ENCODE measurements at regions of chr1 and their contacts with region 1.

Region 1: GRCh38 chr1:226679853-226680516 is 59.1 kb downstream of the ITPKB start:
- H3K4me3 Mint-ChIP-seq: peak overlapping the region; percentile 90
- H3K27ac Mint-ChIP-seq: peak overlapping the region; percentile 99
- H3K4me1 Mint-ChIP-seq: peaks cover 85% of the 10 kb centered on the region
- H3K27me3 Mint-ChIP-seq: no peaks in the 10 kb centered on the region

Region 2: GRCh38 chr1:226642876-226643576 is 37.0 kb before region 1 on chr1:
- intact Hi-C with region 1: loop called (anchors 5 kb)
- H3K4me3 Mint-ChIP-seq: peak overlapping the region; percentile 52
- H3K27ac Mint-ChIP-seq: peak overlapping the region; percentile 90
- H3K4me1 Mint-ChIP-seq: peaks cover 73% of the 10 kb centered on the region
- H3K27me3 Mint-ChIP-seq: no peaks in the 10 kb centered on the region

Region 3: GRCh38 chr1:226662642-226663326 is 17.2 kb before region 1 on chr1:
- intact Hi-C with region 1: loop called (anchors 1 kb)
- H3K4me3 Mint-ChIP-seq: peak overlapping the region; percentile 66
- H3K27ac Mint-ChIP-seq: peak overlapping the region; percentile 85
- H3K4me1 Mint-ChIP-seq: peaks cover 89% of the 10 kb centered on the region
- H3K27me3 Mint-ChIP-seq: no peaks in the 10 kb centered on the region

Region 4: DNA sequence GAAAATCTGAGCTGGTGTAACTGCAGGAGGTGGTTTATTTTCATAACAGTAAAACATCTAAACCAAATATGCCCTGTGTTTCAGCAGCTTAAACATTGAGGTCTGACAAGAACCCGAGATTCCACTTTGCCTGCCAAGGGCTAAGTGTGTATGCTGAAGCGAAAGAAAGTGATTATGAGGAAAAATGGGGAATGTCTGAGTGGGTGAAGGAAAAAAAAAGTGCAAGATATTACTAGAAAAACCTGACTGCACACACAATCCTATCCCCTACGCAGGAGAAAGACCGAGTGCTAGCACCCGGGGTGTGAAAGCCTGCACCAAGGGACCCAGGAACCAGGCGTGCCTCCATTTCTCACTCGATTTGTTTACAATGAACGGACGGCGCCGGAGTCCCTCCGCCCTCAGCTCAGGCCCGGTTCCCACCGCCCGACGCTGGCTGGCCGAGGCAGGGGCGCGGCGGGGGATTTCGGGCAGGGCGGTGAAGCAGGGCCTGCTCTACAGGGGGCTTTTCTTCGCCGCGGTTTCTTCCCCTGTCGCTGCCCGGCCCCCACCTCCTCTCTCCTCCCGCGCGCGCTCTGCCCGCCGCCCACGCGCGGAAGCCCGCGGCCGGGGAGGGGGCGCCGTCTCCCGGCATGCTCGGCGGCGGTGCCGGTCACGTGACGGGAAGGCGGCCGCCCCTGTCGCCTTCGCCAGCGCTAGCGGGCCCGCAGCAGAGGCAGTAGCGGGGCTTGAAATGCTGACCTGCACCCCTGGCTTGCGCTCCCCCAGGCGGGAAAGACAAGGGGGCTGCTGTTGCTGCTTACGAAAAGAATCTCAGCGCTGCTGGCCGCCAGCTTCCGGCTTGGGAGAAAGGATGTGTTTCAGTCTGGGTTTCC is 23.2 kb after region 1 on chr1:
- intact Hi-C with region 1: loop called (anchors 2 kb)
- H3K4me3 Mint-ChIP-seq: peak overlapping the region; percentile 72
- H3K27ac Mint-ChIP-seq: peak overlapping the region; percentile 87
- H3K4me1 Mint-ChIP-seq: peaks cover 25% of the 10 kb centered on the region
- H3K27me3 Mint-ChIP-seq: no peaks in the 10 kb centered on the region

Region 5: DNA sequence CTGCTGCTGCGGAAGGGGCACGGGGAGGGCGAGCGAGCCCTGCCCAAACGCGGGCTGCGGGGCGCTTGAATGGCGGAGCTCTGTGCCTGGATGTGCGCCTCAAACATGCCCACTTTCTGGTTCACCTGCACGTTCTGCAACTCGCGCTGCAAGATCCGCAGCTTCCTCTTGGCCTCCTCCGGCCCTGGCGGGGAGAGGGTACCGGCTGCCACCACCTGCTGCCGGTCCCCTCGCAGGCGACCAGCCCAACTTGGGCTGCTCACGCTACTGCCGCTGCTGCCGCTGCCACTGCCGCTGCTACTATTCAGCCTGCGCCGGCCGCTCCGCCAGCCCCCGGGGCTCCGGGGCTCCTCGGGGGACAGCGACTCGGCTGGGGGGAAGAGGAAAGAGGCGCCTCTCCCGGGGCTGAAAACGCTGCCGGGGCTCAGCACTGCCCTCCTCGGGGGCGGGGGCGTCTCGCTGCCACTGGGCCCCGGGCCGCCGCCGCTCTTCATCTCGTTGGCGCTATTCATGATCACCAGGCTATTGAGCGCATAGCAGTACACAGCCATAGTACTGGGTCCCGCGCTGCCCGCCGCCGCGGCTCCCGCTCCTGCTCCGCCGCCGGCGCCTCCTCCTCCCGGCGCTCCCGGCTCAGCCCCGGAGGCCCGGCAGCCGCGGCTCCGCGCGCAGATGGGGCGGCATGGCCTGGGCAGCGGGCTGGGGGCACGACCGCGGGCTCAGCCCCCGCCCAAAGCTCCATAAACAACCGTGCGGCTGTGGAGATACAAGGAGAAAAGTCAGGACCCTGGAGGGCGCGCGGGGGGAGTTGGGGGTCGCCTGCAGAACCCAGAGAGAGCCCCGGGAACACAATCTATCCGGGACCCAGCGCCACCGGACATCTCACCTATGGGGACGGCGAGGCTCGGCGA is 57.2 kb after region 1 on chr1:
- intact Hi-C with region 1: loop called (anchors 10 kb)
- H3K4me3 Mint-ChIP-seq: peak overlapping the region; percentile 91
- H3K27ac Mint-ChIP-seq: peak overlapping the region; percentile 92
- H3K4me1 Mint-ChIP-seq: peaks cover 40% of the 10 kb centered on the region
- H3K27me3 Mint-ChIP-seq: no peaks in the 10 kb centered on the region

Measured in dendritic cell treated with granulocyte-macrophage colony-stimulating factor and Interleukin-4, amounts not matched to agents 40 ng/mL and 50 ng/mL, for 4 days (primary cell).